Activated B cell treated with CpG ODN at 0.5 μM for 24 hours (primary cell): ENCODE measurements at regions of chr2 and their contacts with region 1.

Region 1: DNA sequence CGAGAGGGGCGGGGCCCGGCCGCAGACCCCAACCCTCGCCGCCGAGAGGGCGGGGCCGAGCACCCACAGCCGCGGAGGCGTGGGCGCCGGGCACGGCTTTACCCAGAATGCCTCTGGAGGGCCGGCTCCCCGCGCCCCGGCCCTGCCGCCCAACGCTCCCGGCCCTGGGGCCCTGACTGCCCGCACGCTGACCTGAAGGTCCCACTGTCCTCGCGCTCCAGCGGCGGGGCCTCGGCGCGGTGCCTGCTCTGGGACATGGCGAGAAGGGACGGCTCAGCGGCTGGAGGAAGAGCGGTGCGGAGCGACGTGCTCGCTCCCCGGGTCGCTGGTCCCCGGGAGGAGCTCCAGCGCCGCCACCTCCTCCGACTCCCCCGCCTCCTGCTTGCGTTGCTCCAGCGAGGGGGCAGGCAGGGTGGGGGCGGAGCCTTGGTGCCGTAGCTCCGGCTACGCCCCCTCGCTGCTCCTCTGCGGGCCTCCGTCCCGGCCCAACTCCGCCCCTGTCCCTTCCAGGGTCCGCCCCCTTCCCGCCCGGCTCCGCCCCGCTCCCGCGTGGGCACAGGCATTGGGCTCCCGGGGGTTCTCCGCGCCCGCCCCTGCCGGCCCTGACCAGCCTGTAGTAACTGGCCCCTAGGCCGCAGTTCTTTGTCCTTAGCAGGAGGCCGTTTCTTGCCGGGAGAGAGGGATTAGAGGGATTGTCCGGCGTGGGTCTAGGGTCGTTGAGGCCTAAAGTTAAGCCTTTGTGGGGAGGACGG is at the starts of genes PJVK and PRKRA:
- DNase-seq: peak; percentile 97
- ATAC-seq: peak; percentile 91
- H3K4me3 Mint-ChIP-seq: peak within 1 kb of the TSS; percentile 87
- H3K27ac Mint-ChIP-seq: peak within 1 kb of the TSS; percentile 86
- H3K4me1 Mint-ChIP-seq: peaks cover 28% of the 10 kb centered on the region
- H3K27me3 Mint-ChIP-seq: no peaks in the 10 kb centered on the region
- CTCF ChIP-seq: no peak
- total RNA-seq, gene PJVK: 2.0 and 3.1 TPM in 2 replicates
- total RNA-seq, gene PRKRA: 49.6 and 61.3 TPM in 2 replicates

Region 2: GRCh38 chr2:178414266-178415247 is 36.4 kb before region 1 on chr2:
- CTCF ChIA-PET with region 1: interaction called, 11 read pairs
- POLR2A ChIA-PET with region 1: interaction called, 25 read pairs
- intact Hi-C with region 1: loop called (anchors 1 kb)
- DNase-seq: peak; percentile 58
- ATAC-seq: peak; percentile 75
- H3K4me3 Mint-ChIP-seq: peak overlapping the region; percentile 94
- H3K27ac Mint-ChIP-seq: peak overlapping the region; percentile 89
- H3K4me1 Mint-ChIP-seq: peaks cover 20% of the 10 kb centered on the region
- H3K27me3 Mint-ChIP-seq: no peaks in the 10 kb centered on the region
- CTCF ChIP-seq: no peak

Region 3: DNA sequence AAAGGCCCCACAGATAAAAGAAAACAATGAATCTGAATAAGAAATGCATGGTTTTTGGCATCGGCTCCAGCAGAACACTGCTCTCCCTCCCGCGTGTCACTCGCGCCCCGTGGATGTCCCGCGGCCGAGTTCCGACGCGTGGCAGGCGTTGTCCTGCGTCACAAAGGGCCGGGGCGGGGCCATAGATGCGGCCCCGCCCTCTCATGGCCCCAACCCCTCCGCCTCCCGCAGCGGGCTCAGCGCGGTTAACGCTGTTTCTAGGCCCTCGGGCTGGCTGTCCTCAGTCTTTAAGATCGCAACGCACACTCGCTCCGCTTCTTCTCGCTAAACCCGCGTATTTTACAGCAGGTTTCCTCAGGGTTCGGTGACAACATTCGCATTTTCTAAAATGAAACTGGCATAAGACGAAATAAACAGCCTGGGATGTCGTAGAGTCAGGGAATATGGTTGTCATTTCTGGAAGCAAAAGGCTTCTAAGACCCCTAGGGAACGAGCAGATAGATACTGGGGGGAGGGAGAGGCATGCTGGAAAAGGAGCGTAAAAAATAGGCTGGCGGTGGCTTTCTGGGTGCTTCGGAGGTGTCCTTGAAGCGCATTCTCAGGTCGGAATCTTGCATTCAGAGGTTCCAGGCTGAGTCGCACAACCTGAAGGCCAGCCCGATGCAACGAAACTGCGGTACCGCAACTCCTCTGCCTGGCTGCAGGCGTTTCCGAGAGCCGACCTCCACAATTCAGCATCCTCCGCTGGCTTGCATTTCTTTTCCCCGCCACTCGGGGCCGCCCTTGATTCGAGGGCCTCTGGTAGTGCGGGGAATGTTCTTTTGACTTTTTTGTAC is 27.7 kb after region 1 on chr2 and contains the start of gene FKBP7:
- CTCF ChIA-PET with region 1: interaction called, 4 read pairs
- POLR2A ChIA-PET with region 1: interaction called, 70 read pairs
- intact Hi-C with region 1: loop called (anchors 1 kb)
- DNase-seq: peak; percentile 69
- ATAC-seq: peak; percentile 70
- H3K4me3 Mint-ChIP-seq: peak within 1 kb of the TSS; percentile 94
- H3K27ac Mint-ChIP-seq: peak within 1 kb of the TSS; percentile 97
- H3K4me1 Mint-ChIP-seq: peaks cover 43% of the 10 kb centered on the region
- H3K27me3 Mint-ChIP-seq: no peaks in the 10 kb centered on the region
- CTCF ChIP-seq: no peak
- total RNA-seq, gene FKBP7: 0.44 and 0.64 TPM in 2 replicates

Region 4: GRCh38 chr2:178530625-178531142 is 79.7 kb after region 1 on chr2:
- CTCF ChIA-PET with region 1: interaction called, 3 read pairs
- POLR2A ChIA-PET with region 1: interaction called, 20 read pairs
- intact Hi-C with region 1: loop called (anchors 2 kb)
- DNase-seq: peak; percentile 43
- ATAC-seq: peak; percentile 95
- H3K4me3 Mint-ChIP-seq: peak overlapping the region; percentile 81
- H3K27ac Mint-ChIP-seq: peak overlapping the region; percentile 91
- H3K4me1 Mint-ChIP-seq: peaks cover 57% of the 10 kb centered on the region
- H3K27me3 Mint-ChIP-seq: no peaks in the 10 kb centered on the region
- CTCF ChIP-seq: no peak

Region 5: GRCh38 chr2:180006781-180007579 is 1556.0 kb after region 1 on chr2 and contains the start of gene CWC22:
- CTCF ChIA-PET with region 1: no interaction called
- POLR2A ChIA-PET with region 1: no interaction called
- intact Hi-C with region 1: loop called (anchors 1 kb)
- DNase-seq: peak; percentile 75
- ATAC-seq: peak; percentile 93
- H3K4me3 Mint-ChIP-seq: peak within 1 kb of the TSS; percentile 93
- H3K27ac Mint-ChIP-seq: peak within 1 kb of the TSS; percentile 98
- H3K4me1 Mint-ChIP-seq: peaks cover 43% of the 10 kb centered on the region
- H3K27me3 Mint-ChIP-seq: no peaks in the 10 kb centered on the region
- CTCF ChIP-seq: no peak
- total RNA-seq, gene CWC22: 27.5 and 28.9 TPM in 2 replicates